IMR-90 (cell line): ENCODE measurements at regions of chr16 and their contacts with region 1.

Region 1: DNA sequence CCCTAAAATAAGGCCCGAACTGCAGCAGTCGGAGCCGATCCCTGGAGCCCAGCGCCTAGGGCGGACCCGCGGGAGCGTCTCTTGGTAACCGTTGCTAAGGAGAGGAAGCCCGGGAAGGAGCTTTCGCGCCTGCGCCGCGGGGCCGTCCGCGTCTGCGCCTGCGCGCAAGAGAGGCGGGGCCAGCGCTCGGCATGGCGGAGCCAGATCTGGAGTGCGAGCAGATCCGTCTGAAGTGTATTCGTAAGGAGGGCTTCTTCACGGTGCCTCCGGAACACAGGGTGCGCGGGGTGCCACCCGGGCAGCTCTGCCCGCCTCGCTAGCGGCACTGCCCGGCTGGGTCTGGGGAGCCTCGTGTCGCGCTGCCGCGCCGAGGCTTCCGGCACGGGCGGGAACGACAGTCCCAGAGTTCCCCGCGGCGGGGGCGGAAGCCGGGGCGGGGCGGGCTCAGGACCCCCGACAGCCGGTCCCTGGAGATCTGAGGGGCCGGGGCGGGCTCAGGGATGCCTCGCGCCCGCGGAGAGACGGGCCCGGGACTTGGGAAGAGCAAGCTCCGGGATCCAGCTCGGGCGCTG is at the start of gene CDK10:
- DNase-seq: peak; percentile 76
- ATAC-seq: peak; percentile 93
- H3K4me3 ChIP-seq: peak within 1 kb of the TSS; percentile 78
- H3K27ac ChIP-seq: peak within 1 kb of the TSS; percentile 98
- H3K4me1 ChIP-seq: peaks cover 3% of the 10 kb centered on the region
- H3K27me3 ChIP-seq: no peaks in the 10 kb centered on the region
- CTCF ChIP-seq: no peak
- POLR2A ChIP-seq: peak; percentile 61; the same call in 1 of the 2 replicates
- RAD21 ChIP-seq: no peak
- total RNA-seq, gene CDK10: 18.6 and 19.5 TPM in 2 replicates

Region 2: DNA sequence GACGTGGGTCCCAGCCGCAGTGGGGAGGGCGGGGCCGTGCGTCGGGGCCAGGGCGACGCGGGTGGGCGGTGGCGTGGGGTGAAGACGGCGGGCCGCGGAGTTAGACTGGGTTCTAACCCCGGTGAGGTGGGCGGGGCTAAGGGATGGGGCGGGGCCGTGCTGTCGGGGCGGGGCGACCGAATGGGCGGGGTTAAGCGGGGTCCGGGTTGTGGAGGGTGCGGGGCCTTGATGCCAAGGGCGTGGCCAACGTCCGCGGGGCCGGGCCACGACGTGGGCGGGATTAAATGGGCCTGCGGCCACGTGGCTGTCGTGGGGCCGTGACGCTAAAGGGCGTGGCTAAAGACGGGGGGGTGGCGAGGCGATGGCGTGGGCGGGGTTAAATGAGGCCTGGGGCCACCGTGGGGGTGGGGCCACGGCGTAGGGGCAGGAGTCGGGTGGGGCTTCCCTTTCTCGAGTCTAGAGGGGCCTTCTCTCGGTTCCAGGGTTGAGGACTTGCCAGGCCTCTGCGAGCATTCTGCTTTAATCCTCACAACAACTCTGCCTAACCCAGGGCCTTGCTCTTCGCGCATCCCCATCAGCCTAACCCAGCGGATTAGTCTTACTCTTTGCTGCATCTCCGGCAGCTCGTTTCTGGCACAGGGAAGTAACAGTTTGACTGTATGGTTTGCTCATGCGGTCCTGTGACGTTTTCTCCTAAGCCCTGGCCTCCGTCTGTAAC is 187.5 kb after region 1 on chr16:
- CTCF ChIA-PET with region 1: no interaction called
- POLR2A ChIA-PET with region 1: interaction called, 11 read pairs
- dilution Hi-C with region 1: no loop called
- in situ Hi-C with region 1: no loop called
- intact Hi-C with region 1: no loop called
- DNase-seq: peak; percentile 95
- ATAC-seq: peak; percentile 91
- H3K4me3 ChIP-seq: peak overlapping the region; percentile 96
- H3K27ac ChIP-seq: peak overlapping the region; percentile 98
- H3K4me1 ChIP-seq: peaks cover 9% of the 10 kb centered on the region
- H3K27me3 ChIP-seq: no peaks in the 10 kb centered on the region
- CTCF ChIP-seq: no peak
- POLR2A ChIP-seq: no peak
- RAD21 ChIP-seq: no peak